Mammary epithelial cell (primary cell): ENCODE measurements at regions of chr15 and their contacts with region 1.

Region 1: GRCh38 chr15:85831415-85832113 is 36.8 kb upstream of the KLHL25 start:
- DNase-seq: peak; percentile 25
- H3K4me3 ChIP-seq: no peak overlapping the region
- H3K27ac ChIP-seq: no peak overlapping the region
- H3K4me1 ChIP-seq: no peaks in the 10 kb centered on the region
- H3K27me3 ChIP-seq: no peaks in the 10 kb centered on the region
- CTCF ChIP-seq: peak; percentile 54 to 75

Region 2: DNA sequence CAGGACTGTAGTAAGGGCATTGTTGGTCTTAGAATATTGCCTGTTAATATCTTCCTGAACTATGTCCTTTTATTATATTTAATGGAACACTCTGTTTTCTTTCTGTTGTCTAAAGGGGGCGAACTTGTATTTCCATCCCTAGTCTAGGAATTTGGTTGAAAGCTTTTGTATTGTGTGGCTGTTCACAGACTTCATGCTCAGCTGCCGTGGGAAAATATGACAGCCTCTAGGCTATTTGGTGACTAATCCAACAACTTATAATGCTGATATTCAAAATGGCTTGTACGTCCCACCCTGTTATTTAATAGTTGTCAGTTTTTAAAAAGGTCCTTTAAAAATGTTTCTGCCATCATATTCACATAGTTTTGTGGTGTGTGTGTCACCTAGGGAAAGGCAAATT is 239.4 kb before region 1 on chr15:
- CTCF ChIA-PET with region 1: no interaction called
- dilution Hi-C with region 1: no loop called
- in situ Hi-C with region 1: no loop called
- intact Hi-C with region 1: loop called (anchors 10 kb)
- DNase-seq: peak; percentile 88
- H3K4me3 ChIP-seq: no peak overlapping the region
- H3K27ac ChIP-seq: peak overlapping the region; percentile 33
- H3K4me1 ChIP-seq: peaks cover 49% of the 10 kb centered on the region
- H3K27me3 ChIP-seq: no peaks in the 10 kb centered on the region
- CTCF ChIP-seq: peak in 1 of 2 donors; percentile 24

Region 3: GRCh38 chr15:85730001-85730820 is 101.4 kb before region 1 on chr15:
- CTCF ChIA-PET with region 1: no interaction called
- dilution Hi-C with region 1: no loop called
- in situ Hi-C with region 1: loop called in 1 of 2 experiments (anchors 5 kb)
- intact Hi-C with region 1: loop called (anchors 1 kb)
- DNase-seq: peak; percentile 53
- H3K4me3 ChIP-seq: no peak overlapping the region
- H3K27ac ChIP-seq: no peak overlapping the region
- H3K4me1 ChIP-seq: peaks cover 6% of the 10 kb centered on the region
- H3K27me3 ChIP-seq: no peaks in the 10 kb centered on the region
- CTCF ChIP-seq: peak; percentile 62 to 78

Region 4: GRCh38 chr15:85742186-85742821 is 89.3 kb before region 1 on chr15:
- CTCF ChIA-PET with region 1: no interaction called
- dilution Hi-C with region 1: no loop called
- in situ Hi-C with region 1: loop called in 1 of 2 experiments (anchors 5 kb)
- intact Hi-C with region 1: no loop called
- DNase-seq: no peak
- H3K4me3 ChIP-seq: no peak overlapping the region
- H3K27ac ChIP-seq: no peak overlapping the region
- H3K4me1 ChIP-seq: no peaks in the 10 kb centered on the region
- H3K27me3 ChIP-seq: no peaks in the 10 kb centered on the region
- CTCF ChIP-seq: no peak

Region 5: GRCh38 chr15:85751346-85752123 is 80.0 kb before region 1 on chr15:
- CTCF ChIA-PET with region 1: no interaction called
- dilution Hi-C with region 1: no loop called
- in situ Hi-C with region 1: no loop called
- intact Hi-C with region 1: loop called (anchors 1 kb)
- DNase-seq: no peak
- H3K4me3 ChIP-seq: no peak overlapping the region
- H3K27ac ChIP-seq: no peak overlapping the region
- H3K4me1 ChIP-seq: peaks cover 46% of the 10 kb centered on the region
- H3K27me3 ChIP-seq: no peaks in the 10 kb centered on the region
- CTCF ChIP-seq: no peak

Region 6: GRCh38 chr15:85800467-85801123 is 31.0 kb before region 1 on chr15:
- CTCF ChIA-PET with region 1: no interaction called
- dilution Hi-C with region 1: no loop called
- in situ Hi-C with region 1: no loop called
- intact Hi-C with region 1: loop called (anchors 1 kb)
- DNase-seq: peak; percentile 74
- H3K4me3 ChIP-seq: no peak overlapping the region
- H3K27ac ChIP-seq: no peak overlapping the region
- H3K4me1 ChIP-seq: peaks cover 6% of the 10 kb centered on the region
- H3K27me3 ChIP-seq: no peaks in the 10 kb centered on the region
- CTCF ChIP-seq: peak; percentile 26 to 68

Region 7: DNA sequence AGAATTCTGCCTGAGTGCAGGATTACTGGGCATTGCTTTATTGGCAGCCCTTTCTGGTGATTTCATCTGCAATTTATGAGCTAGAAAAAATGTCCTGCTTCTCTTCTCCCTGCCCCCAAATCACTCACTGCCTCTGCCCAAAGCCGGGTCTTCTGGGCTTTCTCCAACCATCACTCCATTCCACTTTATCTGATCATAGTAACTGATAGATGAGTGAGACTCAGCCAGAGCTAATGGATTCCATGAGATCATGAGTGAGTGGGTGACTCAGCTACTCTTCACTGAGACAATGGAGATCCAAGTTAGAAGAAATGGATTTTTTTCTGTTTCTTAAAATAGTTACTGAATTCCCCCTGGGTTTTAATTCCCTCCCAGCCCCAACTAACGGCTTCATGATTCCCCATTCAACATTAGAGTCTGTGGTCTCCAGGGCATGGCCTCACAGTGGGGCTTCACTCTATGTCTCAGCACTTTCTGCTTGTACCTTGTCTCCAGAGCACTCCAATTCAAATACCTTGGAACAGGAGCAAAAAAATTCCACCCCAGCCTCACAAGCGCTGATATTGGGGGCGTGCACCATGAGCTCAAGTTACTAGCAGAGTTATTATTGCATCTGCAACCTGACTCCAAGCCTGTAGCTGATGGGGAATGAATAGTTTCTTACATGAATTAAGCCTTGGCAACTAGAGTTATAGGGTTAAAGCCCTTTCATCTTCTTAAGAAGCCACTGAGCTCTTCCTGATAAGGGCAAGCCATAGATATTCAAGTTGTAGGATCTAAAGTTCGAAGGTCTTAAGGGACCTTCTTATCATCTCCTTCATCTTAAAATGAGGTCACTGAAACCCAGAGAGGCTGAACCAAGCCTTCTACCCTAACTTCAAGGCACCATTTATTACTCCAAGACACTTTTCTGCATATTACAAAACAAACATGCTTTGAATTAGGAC is 334.0 kb after region 1 on chr15:
- CTCF ChIA-PET with region 1: no interaction called
- dilution Hi-C with region 1: no loop called
- in situ Hi-C with region 1: no loop called
- intact Hi-C with region 1: no loop called
- DNase-seq: no peak
- H3K4me3 ChIP-seq: no peak overlapping the region
- H3K27ac ChIP-seq: no peak overlapping the region
- H3K4me1 ChIP-seq: no peaks in the 10 kb centered on the region
- H3K27me3 ChIP-seq: no peaks in the 10 kb centered on the region
- CTCF ChIP-seq: no peak